Activated naive CD4-positive, alpha-beta T cell treated with anti-CD3 and anti-CD28 coated beads for 36 hours (primary cell): ENCODE measurements at regions of chr16 and their contacts with region 1.

Region 1: GRCh38 chr16:11715246-11715947 is 27.3 kb downstream of the TXNDC11 start:
- DNase-seq: no peak
- H3K4me3 Mint-ChIP-seq: no peak overlapping the region
- H3K27ac Mint-ChIP-seq: no peak overlapping the region
- H3K4me1 Mint-ChIP-seq: peaks cover 6% of the 10 kb centered on the region
- H3K27me3 Mint-ChIP-seq: no peaks in the 10 kb centered on the region

Region 2: GRCh38 chr16:11356573-11357331 is 358.6 kb before region 1 on chr16:
- CTCF ChIA-PET with region 1: no interaction called
- intact Hi-C with region 1: no loop called
- DNase-seq: peak; percentile 78
- H3K4me3 Mint-ChIP-seq: no peak overlapping the region
- H3K27ac Mint-ChIP-seq: peak overlapping the region; percentile 28
- H3K4me1 Mint-ChIP-seq: peaks cover 63% of the 10 kb centered on the region
- H3K27me3 Mint-ChIP-seq: no peaks in the 10 kb centered on the region

Region 3: DNA sequence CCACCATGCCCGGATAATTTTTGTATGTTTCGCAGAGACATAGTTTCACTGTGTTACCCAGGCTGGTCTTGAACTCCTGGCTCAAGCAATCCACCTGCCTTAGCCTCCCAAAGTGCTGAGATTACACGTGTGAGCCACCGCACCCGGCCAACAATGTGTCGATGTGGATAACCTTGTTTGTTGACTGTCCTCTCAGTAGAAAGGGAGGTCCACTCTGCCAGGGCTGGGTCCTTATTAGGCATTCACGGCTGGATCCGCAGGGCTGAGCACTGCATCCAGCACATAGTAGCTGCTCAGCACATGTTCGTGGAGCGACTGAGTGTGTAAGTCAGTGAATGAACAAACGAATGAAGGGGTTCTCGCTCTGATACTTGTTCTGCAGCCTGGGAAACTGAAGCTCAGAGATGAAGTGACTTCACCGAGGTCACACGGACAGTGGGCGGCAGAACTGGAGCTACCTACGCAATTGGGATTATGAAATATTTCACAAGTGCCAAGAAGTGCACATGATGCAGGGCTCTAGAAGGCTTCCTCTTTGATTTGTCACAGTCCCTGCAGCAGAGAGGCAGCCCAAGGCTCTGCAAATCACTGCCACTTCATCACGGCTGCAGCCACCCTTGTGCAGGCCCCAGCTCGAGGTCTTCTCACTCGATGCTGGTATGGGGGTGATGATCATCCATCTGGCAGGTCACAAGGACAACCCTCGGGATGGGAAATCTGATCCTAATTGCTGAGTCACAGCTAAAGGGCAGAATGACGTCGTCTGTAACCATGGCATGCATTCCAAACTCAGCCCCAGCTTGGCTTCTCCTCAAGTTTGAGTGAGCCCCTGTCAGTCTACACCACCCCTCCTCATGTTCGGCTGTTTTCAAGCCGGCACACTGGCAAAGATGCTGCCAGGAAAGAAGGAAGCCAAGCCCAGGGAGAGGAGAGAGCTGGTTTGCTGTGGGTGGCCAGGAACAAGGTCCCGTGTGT is 75.2 kb before region 1 on chr16:
- CTCF ChIA-PET with region 1: interaction called, 6 read pairs
- intact Hi-C with region 1: loop called (anchors 1 kb)
- DNase-seq: no peak
- H3K4me3 Mint-ChIP-seq: no peak overlapping the region
- H3K27ac Mint-ChIP-seq: no peak overlapping the region
- H3K4me1 Mint-ChIP-seq: peaks cover 11% of the 10 kb centered on the region
- H3K27me3 Mint-ChIP-seq: no peaks in the 10 kb centered on the region

Region 4: DNA sequence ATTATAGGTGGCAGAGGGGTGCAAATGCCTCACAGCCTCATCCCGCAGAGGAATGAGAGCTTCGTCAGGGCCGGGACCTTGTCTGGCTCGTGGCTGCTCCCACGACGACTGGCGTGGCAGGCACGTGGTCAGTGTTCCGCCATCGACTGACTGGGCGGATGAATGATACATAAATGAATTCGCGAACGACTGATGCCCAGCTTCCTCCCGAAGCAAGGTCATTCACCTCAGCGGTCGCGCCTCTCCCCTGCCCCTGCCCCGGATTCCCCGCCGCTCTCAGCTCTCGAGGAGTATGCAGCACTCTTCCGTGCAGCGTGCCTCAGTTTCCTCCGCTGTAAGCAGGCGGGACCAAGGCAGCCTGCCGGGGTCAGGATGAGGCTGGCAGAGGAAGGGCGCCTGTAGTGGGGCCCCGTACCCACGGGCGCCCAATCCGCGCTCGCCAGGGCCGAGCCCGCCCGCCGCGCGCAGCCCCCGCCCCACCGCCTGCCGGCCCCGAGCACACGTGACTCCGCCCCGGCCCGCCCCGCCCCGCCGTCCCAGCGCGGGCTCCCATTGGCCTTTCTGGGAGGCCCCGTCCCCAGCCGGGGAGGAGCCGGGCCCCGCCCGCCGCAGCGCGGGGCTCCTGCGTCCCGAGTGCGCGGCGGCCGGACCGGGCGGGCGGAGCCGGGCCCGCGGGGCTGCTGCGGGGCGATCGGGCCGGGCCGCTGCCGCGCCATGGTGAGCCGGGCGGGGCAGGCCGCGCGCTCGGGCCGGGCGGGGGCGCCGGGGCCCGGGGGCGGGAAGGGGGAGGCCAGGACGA is 47.4 kb before region 1 on chr16 and contains the start of gene SNN:
- CTCF ChIA-PET with region 1: interaction called, 5 read pairs
- intact Hi-C with region 1: loop called (anchors 5 kb)
- DNase-seq: peak; percentile 89
- H3K4me3 Mint-ChIP-seq: peak within 1 kb of the TSS; percentile 72
- H3K27ac Mint-ChIP-seq: no peak within 1 kb of the TSS
- H3K4me1 Mint-ChIP-seq: peaks cover 71% of the 10 kb centered on the region
- H3K27me3 Mint-ChIP-seq: no peaks in the 10 kb centered on the region
- total RNA-seq, gene SNN: 12.0 to 13.6 TPM

Region 5: GRCh38 chr16:11698271-11698689 is 17.1 kb before region 1 on chr16:
- CTCF ChIA-PET with region 1: interaction called, 15 read pairs
- intact Hi-C with region 1: no loop called
- DNase-seq: peak; percentile 75
- H3K4me3 Mint-ChIP-seq: no peak overlapping the region
- H3K27ac Mint-ChIP-seq: peak overlapping the region; percentile 15
- H3K4me1 Mint-ChIP-seq: peaks cover 39% of the 10 kb centered on the region
- H3K27me3 Mint-ChIP-seq: no peaks in the 10 kb centered on the region

Region 6: GRCh38 chr16:11731222-11731621 is 15.8 kb after region 1 on chr16:
- CTCF ChIA-PET with region 1: interaction called, 16 read pairs
- intact Hi-C with region 1: no loop called
- DNase-seq: no peak
- H3K4me3 Mint-ChIP-seq: no peak overlapping the region
- H3K27ac Mint-ChIP-seq: no peak overlapping the region
- H3K4me1 Mint-ChIP-seq: peaks cover 41% of the 10 kb centered on the region
- H3K27me3 Mint-ChIP-seq: no peaks in the 10 kb centered on the region